Left ventricle myocardium superior (tissue), 1 donor: ENCODE measurements at regions of chr2 and their contacts with region 1.

Region 1: GRCh38 chr2:25376750-25377621 is 35.3 kb upstream of the DNMT3A start:
- DNase-seq: peak; percentile 92
- ATAC-seq: peak; percentile 98

Region 2: GRCh38 chr2:25342372-25343186 is 34.4 kb before region 1 on chr2:
- intact Hi-C with region 1: loop called (anchors 5 kb)
- DNase-seq: peak; percentile 90
- ATAC-seq: peak; percentile 85